CD4-positive, alpha-beta T cell (primary cell): ENCODE measurements at regions of chr6 and their contacts with region 1.

Region 1: GRCh38 chr6:31271641-31272357 is at the start of gene HLA-C:
- DNase-seq: peak; percentile 80 to 98 (median 89)
- ATAC-seq: peak; percentile 89
- H3K4me3 ChIP-seq: peak within 1 kb of the TSS; percentile 79
- H3K4me3 Mint-ChIP-seq: peak within 1 kb of the TSS; percentile 98
- H3K27ac ChIP-seq: peak within 1 kb of the TSS; percentile 96 to 98
- H3K27ac Mint-ChIP-seq: peak within 1 kb of the TSS; percentile 100
- H3K4me1 ChIP-seq: peaks cover 54% of the 10 kb centered on the region
- H3K4me1 Mint-ChIP-seq: peaks cover 65% of the 10 kb centered on the region
- H3K27me3 ChIP-seq: no peaks in the 10 kb centered on the region
- H3K27me3 Mint-ChIP-seq: no peaks in the 10 kb centered on the region
- CTCF ChIP-seq: no peak
- total RNA-seq, gene HLA-C: 1,977 to 1,996 TPM

Region 2: GRCh38 chr6:30974488-30975252 is 297.1 kb before region 1 on chr6:
- CTCF ChIA-PET with region 1: no interaction called
- POLR2A ChIA-PET with region 1: no interaction called
- intact Hi-C with region 1: no loop called
- DNase-seq: no peak
- ATAC-seq: no peak
- H3K4me3 ChIP-seq: no peak overlapping the region
- H3K4me3 Mint-ChIP-seq: no peak overlapping the region
- H3K27ac ChIP-seq: no peak overlapping the region
- H3K27ac Mint-ChIP-seq: no peak overlapping the region
- H3K4me1 ChIP-seq: no peaks in the 10 kb centered on the region
- H3K4me1 Mint-ChIP-seq: no peaks in the 10 kb centered on the region
- H3K27me3 ChIP-seq: peaks cover 1 to 4% of the 10 kb centered on the region in 2 experiments
- H3K27me3 Mint-ChIP-seq: peaks cover 29% of the 10 kb centered on the region
- CTCF ChIP-seq: no peak

Region 3: GRCh38 chr6:30985490-30985889 is 286.3 kb before region 1 on chr6:
- CTCF ChIA-PET with region 1: no interaction called
- POLR2A ChIA-PET with region 1: no interaction called
- intact Hi-C with region 1: no loop called
- DNase-seq: no peak
- ATAC-seq: no peak
- H3K4me3 ChIP-seq: no peak overlapping the region
- H3K4me3 Mint-ChIP-seq: no peak overlapping the region
- H3K27ac ChIP-seq: no peak overlapping the region
- H3K27ac Mint-ChIP-seq: no peak overlapping the region
- H3K4me1 ChIP-seq: peaks cover 7% of the 10 kb centered on the region
- H3K4me1 Mint-ChIP-seq: peaks cover 5% of the 10 kb centered on the region
- H3K27me3 ChIP-seq: peaks cover 0 to 4% of the 10 kb centered on the region in 2 experiments
- H3K27me3 Mint-ChIP-seq: peaks cover 29% of the 10 kb centered on the region
- CTCF ChIP-seq: no peak

Region 4: DNA sequence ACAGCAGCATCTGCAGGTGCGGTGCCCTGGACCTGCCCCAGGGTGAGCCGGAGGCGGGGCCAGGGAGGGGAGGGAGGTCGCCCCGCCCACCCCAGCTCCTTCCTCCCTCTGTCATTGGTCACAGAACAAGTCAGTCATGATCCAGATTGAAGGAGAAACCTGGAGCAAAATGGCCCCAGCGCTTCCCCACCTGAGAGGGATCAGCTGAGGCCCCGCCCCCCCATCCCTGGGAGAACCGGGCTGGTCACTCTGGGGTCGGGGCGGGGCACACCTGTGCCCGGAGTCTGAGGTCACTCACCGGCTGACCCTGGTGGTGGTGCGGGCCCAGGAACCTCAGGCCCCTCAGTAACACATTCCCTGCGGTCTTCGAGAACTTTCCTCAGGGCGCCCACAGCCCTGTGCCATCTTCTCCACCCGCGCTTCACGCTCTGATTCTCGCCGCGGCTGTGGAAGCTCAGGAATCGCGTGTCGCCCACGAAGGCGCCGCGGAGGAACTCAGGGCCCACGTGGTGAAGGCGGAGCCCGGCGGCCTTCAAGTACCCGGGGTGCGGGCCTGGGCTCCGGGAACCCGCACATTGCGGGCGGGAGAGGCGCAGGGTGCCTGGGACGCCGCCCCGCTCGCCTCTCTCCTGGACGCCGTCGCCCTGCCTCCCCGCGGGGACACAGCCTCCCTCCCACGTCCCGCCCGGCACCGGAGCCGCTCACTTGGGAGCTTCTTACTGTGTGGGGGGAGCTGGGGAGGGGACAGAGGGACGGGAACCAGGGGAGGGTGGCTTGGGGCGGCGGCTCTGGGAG is 36.4 kb after region 1 on chr6:
- CTCF ChIA-PET with region 1: no interaction called
- POLR2A ChIA-PET with region 1: interaction called, 6 read pairs
- intact Hi-C with region 1: loop called in 1 of 2 experiments (anchors 5 kb)
- DNase-seq: peak; percentile 58 to 90 (median 68)
- ATAC-seq: peak; percentile 95
- H3K4me3 ChIP-seq: peak overlapping the region; percentile 73
- H3K4me3 Mint-ChIP-seq: peak overlapping the region; percentile 95
- H3K27ac ChIP-seq: no peak overlapping the region
- H3K27ac Mint-ChIP-seq: peak overlapping the region; percentile 76
- H3K4me1 ChIP-seq: peaks cover 18% of the 10 kb centered on the region
- H3K4me1 Mint-ChIP-seq: no peaks in the 10 kb centered on the region
- H3K27me3 ChIP-seq: peaks cover 0 to 3% of the 10 kb centered on the region in 2 experiments
- H3K27me3 Mint-ChIP-seq: peaks cover 14% of the 10 kb centered on the region
- CTCF ChIP-seq: no peak

Region 5: DNA sequence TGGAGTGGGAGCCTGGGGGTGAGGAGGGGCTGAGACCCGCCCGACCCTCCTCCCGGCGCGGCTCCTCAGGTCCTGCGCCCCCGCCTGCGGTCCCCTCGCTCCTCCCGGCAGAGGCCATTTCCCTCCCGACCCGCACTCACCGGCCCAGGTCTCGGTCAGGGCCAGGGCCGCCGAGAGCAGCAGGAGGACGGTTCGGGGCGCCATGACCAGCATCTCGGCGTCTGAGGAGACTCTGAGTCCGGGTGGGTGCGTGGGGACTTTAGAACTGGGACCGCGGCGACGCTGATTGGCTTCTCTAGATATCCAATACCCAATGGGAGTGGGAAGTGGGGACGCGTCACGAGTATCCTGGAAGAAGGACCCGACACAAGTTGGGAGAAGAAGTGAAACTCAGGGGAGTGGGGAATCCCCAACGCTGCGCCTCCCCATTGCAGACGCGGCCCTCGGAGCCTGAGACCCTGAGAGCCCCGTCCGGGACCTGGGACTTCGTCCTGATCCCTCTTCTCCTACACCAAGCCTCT is 85.2 kb after region 1 on chr6 and contains the start of gene HLA-B:
- CTCF ChIA-PET with region 1: no interaction called
- POLR2A ChIA-PET with region 1: interaction called, 41 read pairs
- intact Hi-C with region 1: loop called (anchors 1 to 2 kb)
- DNase-seq: peak; percentile 67 to 99 (median 76)
- ATAC-seq: peak; percentile 84
- H3K4me3 ChIP-seq: peak within 1 kb of the TSS; percentile 76
- H3K4me3 Mint-ChIP-seq: peak within 1 kb of the TSS; percentile 100
- H3K27ac ChIP-seq: peak within 1 kb of the TSS; percentile 97 to 99
- H3K27ac Mint-ChIP-seq: peak within 1 kb of the TSS; percentile 100
- H3K4me1 ChIP-seq: peaks cover 50% of the 10 kb centered on the region
- H3K4me1 Mint-ChIP-seq: peaks cover 71% of the 10 kb centered on the region
- H3K27me3 ChIP-seq: no peaks in the 10 kb centered on the region
- H3K27me3 Mint-ChIP-seq: peaks cover 5% of the 10 kb centered on the region
- CTCF ChIP-seq: no peak
- total RNA-seq, gene HLA-B: 6,758 to 7,013 TPM